HEK293 (cell line): ENCODE measurements at regions of chr22 and their contacts with region 1.

Region 1: DNA sequence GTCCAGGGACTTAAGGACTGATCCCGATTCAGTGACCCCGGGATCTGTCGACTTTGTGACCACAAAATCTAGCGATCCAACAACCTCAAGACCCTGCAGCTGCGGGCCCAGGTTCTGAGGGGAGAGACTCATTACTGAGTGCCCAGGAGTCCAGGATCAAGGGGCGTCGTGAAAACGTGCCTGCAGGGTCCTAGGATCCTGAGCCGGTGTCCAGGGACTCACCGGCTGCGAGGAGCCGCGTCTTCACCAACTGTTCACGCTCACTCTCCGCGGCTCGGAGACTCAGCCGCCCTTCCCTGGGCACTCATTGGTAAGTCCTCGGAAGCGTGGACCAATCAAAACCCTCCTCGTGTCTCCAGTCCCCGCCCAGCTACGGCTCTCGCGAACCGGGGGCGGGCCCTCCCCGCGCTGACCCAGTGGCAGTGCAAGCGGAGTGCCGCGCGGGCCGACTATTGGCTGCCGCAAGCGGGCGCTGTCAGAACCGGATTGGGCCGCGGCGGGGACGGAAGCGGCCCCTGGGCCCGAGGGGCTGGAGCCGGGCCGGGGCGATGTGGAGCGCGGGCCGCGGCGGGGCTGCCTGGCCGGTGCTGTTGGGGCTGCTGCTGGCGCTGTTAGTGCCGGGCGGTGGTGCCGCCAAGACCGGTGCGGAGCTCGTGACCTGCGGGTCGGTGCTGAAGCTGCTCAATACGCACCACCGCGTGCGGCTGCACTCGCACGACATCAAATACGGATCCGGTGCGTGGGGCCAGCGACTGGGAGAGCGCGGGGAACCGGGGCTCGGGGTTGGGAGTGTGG is at the start of gene SDF2L1:
- H3K4me3 ChIP-seq: peak within 1 kb of the TSS; percentile 73
- H3K27ac ChIP-seq: peak within 1 kb of the TSS; percentile 6; the same call in 1 of the 2 replicates
- H3K4me1 ChIP-seq: no peaks in the 10 kb centered on the region
- CTCF ChIP-seq: no peak; the same call in 1 of the 2 replicates

Region 2: DNA sequence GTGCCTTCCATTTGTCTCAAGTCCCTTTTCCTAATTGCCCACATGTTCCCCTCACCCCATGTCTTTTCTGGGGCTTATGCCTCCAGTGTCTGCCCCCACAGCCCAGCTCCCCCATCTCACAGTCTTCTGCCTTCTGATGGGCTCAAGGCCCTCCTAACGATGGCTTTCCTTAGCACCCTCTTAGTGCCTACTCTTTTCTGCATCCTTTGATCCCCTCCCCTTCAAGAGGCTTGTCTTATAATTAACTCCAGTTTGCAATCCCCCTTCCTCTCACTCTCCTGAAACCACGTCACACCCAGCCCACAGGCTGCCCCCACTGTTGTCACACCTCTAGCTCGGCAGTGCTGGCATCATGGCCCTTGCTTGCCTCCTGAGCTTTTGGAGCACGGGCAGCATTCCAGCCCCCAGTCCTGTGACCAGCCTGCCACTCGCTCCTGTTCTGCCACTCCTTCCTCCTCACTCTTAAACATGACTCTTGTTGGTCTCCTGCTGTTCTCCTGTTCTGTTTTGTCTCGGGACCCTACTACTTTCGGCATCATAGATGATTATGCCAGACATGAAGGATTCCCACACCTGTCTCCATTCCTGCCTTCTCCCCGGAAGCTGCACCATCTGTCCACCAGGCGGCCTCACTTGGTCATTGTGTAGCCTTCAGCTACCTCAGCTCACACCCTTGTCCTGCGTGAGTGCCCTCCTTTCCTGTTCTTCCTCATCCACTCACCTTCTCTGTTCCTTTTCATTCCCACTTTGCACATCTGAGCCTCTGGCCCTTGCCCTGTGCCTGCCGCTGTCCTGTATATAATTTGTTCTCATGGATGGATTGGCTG is 48.4 kb before region 1 on chr22:
- CTCF ChIA-PET with region 1: interaction called, 18 read pairs
- POLR2A ChIA-PET with region 1: no interaction called
- H3K4me3 ChIP-seq: no peak overlapping the region
- H3K27ac ChIP-seq: no peak overlapping the region
- H3K4me1 ChIP-seq: no peaks in the 10 kb centered on the region
- CTCF ChIP-seq: peak; percentile 67

Region 3: DNA sequence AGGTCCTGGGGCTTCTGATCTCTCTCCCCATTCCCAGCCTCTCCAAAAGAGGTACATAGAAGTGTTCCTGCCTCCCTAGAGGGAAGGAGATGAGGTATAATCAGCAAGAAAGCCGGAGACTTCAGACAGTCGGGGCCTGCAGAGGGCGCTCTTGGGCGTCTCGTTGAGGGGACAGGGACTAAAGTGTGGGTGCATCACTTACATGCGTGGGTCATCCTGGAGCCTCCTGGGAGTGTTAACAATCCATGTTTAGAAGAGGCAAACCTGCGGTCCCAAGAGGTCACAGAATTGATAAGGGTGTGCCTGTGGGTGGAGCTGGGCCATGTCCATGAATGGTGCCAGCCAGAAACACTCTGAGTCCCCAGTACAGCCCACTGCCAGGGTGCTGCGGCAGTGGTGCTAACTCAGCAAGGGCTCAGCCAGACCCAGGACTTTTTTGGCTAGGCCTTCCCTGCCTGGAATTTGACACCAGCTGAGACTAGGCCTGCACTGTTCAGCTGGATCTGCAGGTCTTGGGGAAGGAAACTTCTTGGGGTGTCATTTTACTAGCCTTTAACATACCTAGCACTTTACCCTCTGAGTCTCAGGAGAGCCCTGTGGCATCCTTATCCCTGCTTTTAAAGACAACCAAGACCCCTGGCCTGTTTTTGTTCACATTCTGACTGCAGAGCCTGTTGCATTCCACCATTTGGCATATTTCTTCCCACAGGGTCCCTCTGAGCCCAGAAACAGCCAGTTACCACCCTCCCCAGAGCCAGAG is 17.7 kb before region 1 on chr22:
- CTCF ChIA-PET with region 1: interaction called, 109 read pairs
- POLR2A ChIA-PET with region 1: interaction called, 50 read pairs
- H3K4me3 ChIP-seq: no peak overlapping the region
- H3K27ac ChIP-seq: no peak overlapping the region
- H3K4me1 ChIP-seq: no peaks in the 10 kb centered on the region
- CTCF ChIP-seq: peak; percentile 77

Region 4: DNA sequence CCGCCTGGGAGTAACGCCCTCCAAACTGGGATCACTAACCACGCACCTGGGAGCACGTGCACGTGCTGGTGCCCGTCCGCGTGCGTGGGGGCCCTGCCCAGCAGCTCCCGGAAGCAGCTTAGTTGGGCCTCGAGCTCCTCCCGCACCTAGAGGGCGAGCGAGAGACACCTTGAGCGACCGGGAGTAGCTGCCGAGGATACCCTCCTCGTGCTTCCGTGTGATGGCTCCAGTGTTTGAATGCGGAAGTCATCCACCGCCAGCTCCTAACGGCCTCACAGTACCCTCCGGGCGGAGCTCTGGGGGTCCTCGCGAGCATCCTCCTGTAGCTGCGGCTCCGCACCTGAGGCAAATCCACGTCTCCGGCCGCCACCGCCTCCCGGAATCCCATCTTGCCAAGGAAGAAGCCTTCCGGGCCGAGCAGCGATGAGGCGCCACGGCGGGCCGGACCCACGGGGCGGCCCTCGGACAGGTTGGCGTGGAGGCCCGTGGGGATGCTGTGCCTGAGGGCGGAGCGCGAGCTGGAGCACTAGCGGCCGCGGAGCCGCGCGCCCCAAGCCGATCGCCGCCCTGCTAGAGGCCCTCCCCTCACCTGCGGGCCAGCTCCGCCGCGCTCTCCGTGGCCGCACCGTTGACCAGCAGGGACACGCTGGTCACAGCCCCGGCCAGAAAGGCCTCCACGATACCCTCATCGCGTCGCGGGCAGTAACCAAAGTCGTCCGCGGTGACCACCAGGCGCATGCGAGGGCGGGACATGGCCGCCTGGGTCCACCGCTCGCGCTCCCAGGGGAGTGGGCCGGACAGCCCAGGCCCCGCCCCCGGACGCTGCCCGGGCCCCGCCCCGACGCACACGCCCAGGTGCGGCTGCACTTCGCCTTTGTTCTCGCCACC is 12.5 kb before region 1 on chr22 and contains the start of gene YDJC:
- CTCF ChIA-PET with region 1: interaction called, 109 read pairs
- POLR2A ChIA-PET with region 1: interaction called, 50 read pairs
- H3K4me3 ChIP-seq: peak within 1 kb of the TSS; percentile 87
- H3K27ac ChIP-seq: peak within 1 kb of the TSS; percentile 76
- H3K4me1 ChIP-seq: no peaks in the 10 kb centered on the region
- CTCF ChIP-seq: peak; percentile 91

Region 5: GRCh38 chr22:21652010-21652546 is 10.1 kb after region 1 on chr22:
- CTCF ChIA-PET with region 1: interaction called, 25 read pairs
- POLR2A ChIA-PET with region 1: interaction called, 18 read pairs
- H3K4me3 ChIP-seq: peak overlapping the region; percentile 83
- H3K27ac ChIP-seq: peak overlapping the region; percentile 48; the same call in 1 of the 2 replicates
- H3K4me1 ChIP-seq: no peaks in the 10 kb centered on the region
- CTCF ChIP-seq: no peak